Sigmoid colon (tissue), 7 donors: ENCODE measurements at regions of chr6 and their contacts with region 1.

Region 1: GRCh38 chr6:26103770-26104456 is 16.7 kb downstream of the HFE start:
- DNase-seq: peak; percentile 97
- H3K4me3 ChIP-seq: peak overlapping the region; percentile 34 to 58 (median 52)
- H3K27ac ChIP-seq: peak overlapping the region; percentile 82 to 92 (median 90)
- H3K4me1 ChIP-seq: peaks cover 0 to 12% (median 11%) of the 10 kb centered on the region in 4 donors
- H3K27me3 ChIP-seq: no peaks in the 10 kb centered on the region
- CTCF ChIP-seq: peak; percentile 38 to 49 (median 42)
- EP300 ChIP-seq: peak in 2 of 4 donors; percentile 19 to 63
- POLR2A ChIP-seq: peak; percentile 97 to 99

Region 2: GRCh38 chr6:25962149-25963127 is 141.5 kb before region 1 on chr6 and contains the start of gene TRIM38:
- intact Hi-C with region 1: no loop called
- DNase-seq: peak; percentile 91
- H3K4me3 ChIP-seq: peak within 1 kb of the TSS; percentile 56 to 62 (median 61)
- H3K27ac ChIP-seq: peak within 1 kb of the TSS; percentile 86 to 91 (median 86)
- H3K4me1 ChIP-seq: peaks cover 0 to 53% (median 42%) of the 10 kb centered on the region in 4 donors
- H3K27me3 ChIP-seq: no peaks in the 10 kb centered on the region
- CTCF ChIP-seq: no peak
- EP300 ChIP-seq: no peak
- POLR2A ChIP-seq: peak; percentile 92 to 94
- total RNA-seq, gene TRIM38: 7.5 to 13.3 (median 8.2) TPM

Region 3: GRCh38 chr6:26216356-26216885 is 112.5 kb after region 1 on chr6:
- intact Hi-C with region 1: loop called (anchors 5 kb)
- DNase-seq: peak; percentile 93
- H3K4me3 ChIP-seq: peak overlapping the region; percentile 46 to 59 (median 50)
- H3K27ac ChIP-seq: peak overlapping the region; percentile 88 to 97 (median 94)
- H3K4me1 ChIP-seq: peaks cover 0 to 26% (median 23%) of the 10 kb centered on the region in 4 donors
- H3K27me3 ChIP-seq: no peaks in the 10 kb centered on the region
- CTCF ChIP-seq: no peak
- EP300 ChIP-seq: peak in 2 of 4 donors; percentile 41 to 86
- POLR2A ChIP-seq: peak; percentile 97 to 99